Activated T-helper 1 cell treated with anti-CD3 and anti-CD28 coated beads, Interleukin-12 subunit alpha, Interleukin-12 subunit beta, Interleukin-2, Interleukin-4 antibody, amounts not matched to agents 30 ng/mL and 10 ng/mL and 1 ng/mL, durations not matched to agents 14 hours and 24 hours and 36 hours (primary cell): ENCODE measurements at regions of chr15 and their contacts with region 1.

Region 1: DNA sequence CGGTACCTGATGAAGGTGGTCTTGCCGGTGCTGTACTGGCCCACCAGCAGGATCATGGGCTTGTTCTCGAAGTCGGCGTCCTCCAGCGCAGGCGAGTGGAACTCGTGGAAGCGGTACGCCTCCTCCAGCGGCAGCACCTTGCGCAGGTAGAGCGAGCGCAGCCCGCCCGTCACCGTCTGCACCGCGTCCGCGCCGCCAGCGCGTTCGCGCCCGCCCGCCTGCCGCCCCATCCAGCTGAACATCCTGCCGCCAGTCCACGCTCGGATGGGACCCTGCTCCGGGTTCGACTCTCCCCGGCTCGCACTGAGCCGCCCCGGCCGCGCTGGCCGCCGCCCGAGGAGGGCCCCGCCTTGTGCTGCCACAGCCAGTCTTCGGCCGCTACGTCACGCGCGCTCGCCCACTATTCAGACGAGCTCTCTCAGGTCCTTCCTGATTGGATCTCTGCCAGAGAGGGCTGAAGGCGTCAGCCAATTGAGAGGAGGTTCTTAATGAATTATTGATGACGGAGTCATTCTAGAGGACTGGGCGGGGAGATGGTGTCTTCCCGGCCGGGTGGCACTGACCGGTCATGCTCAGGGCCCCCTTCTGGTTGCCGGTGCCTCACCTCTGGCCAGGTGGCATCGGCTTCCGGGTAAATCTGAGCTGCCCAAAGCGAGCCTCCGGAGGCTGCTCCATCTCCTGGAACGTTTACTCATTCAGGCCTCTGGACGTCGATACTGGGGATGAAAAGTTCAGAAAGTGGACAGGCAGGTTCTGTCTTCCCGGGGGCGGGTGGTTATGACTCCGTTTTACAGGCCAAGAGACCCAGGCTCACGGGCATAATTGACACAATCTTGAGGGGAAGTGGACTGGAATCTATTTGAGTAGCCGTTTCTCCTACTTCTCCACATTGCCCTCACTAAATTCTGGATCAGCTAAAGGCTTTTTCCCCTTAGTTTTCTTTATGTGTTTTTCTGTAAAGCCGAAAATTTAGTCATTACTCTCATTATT is at the start of gene EHD4:
- DNase-seq: peak; percentile 95
- H3K4me3 Mint-ChIP-seq: peak within 1 kb of the TSS; percentile 91
- H3K27ac Mint-ChIP-seq: peak within 1 kb of the TSS; percentile 91
- H3K4me1 Mint-ChIP-seq: peaks cover 60% of the 10 kb centered on the region
- H3K27me3 Mint-ChIP-seq: peaks cover 7% of the 10 kb centered on the region
- total RNA-seq, gene EHD4: 29.5 and 30.1 TPM in 2 replicates

Region 2: GRCh38 chr15:41660235-41661077 is 312.1 kb before region 1 on chr15 and contains the start of gene MGA:
- intact Hi-C with region 1: loop called (anchors 2 kb)
- DNase-seq: peak; percentile 88
- H3K4me3 Mint-ChIP-seq: peak within 1 kb of the TSS; percentile 90
- H3K27ac Mint-ChIP-seq: peak within 1 kb of the TSS; percentile 91
- H3K4me1 Mint-ChIP-seq: peaks cover 37% of the 10 kb centered on the region
- H3K27me3 Mint-ChIP-seq: peaks cover 28% of the 10 kb centered on the region
- total RNA-seq, gene MGA: 37.5 and 38.8 TPM in 2 replicates

Region 3: DNA sequence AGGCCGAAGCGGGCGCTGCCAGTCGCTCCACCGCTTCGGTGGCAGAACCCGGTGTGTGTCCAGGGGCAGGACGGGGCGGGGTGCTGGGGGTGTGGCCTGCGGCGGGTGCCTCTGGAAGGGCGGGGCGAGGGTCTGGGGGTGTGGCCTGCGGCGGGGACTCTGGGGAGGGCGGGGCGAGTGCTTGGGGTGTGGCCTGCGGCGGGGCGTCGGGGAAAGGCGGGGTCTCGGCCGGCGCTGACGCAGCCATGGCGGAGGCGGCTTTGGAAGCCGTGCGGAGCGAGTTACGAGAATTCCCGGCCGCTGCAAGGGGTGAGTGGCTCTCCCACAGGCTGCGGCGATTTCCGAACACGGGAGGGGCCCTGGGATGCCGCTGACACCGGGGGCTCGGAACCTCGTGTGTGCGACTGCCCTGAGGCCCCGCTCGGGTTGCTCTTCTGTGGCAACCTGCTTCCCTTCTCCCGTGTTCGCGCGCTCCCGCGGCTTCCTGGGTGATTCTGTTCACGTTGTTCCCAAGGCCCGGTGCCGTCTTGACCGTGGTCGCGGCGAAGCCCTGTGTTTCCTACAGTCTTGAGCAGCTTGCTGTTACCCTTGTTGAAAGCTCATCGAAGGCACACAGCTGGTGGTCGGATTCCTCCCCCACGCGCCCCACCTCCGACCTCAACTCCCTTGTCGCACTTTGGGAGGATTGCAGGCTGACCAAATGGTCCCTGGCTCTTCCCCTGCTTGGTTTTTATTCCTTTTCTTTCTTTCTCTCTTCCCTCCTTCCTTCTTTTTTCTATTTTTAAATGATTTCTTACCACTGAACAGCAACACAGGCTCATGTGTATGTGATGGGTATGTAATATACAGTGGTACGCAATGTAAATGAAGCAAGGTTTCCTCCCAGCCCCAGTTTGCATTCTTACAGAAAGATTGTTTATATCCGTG is 144.4 kb before region 1 on chr15 and contains the start of gene JMJD7:
- intact Hi-C with region 1: loop called (anchors 2 kb)
- DNase-seq: peak; percentile 88
- H3K4me3 Mint-ChIP-seq: peak within 1 kb of the TSS; percentile 86
- H3K27ac Mint-ChIP-seq: peak within 1 kb of the TSS; percentile 72
- H3K4me1 Mint-ChIP-seq: peaks cover 34% of the 10 kb centered on the region
- H3K27me3 Mint-ChIP-seq: no peaks in the 10 kb centered on the region
- total RNA-seq, gene JMJD7: 14.2 and 17.8 TPM in 2 replicates

Region 4: DNA sequence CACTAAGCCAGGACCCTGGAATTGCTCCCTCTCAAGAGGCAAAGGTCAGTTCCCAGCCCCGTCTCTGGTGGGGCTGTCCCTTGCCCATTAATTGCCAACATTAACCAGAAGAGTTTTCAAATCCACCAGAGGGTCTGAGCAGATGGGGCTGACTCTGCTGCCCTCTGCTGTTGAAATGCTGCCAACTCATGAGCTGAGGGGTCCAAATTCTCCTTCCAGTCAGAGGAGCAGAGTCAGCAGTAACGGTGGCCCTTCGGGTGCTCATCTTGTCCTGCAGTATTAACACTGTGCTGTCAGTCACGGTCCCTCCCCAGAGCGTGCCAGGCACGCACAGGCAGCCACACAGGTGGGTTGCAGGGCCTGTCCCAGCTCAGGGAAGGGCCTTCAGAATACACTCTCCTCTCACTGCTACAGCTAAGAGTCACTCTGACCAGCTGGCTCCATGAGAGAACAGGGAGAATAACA is 68.0 kb before region 1 on chr15:
- intact Hi-C with region 1: loop called (anchors 2 kb)
- DNase-seq: peak; percentile 50
- H3K4me3 Mint-ChIP-seq: no peak overlapping the region
- H3K27ac Mint-ChIP-seq: no peak overlapping the region
- H3K4me1 Mint-ChIP-seq: peaks cover 8% of the 10 kb centered on the region
- H3K27me3 Mint-ChIP-seq: no peaks in the 10 kb centered on the region

Region 5: DNA sequence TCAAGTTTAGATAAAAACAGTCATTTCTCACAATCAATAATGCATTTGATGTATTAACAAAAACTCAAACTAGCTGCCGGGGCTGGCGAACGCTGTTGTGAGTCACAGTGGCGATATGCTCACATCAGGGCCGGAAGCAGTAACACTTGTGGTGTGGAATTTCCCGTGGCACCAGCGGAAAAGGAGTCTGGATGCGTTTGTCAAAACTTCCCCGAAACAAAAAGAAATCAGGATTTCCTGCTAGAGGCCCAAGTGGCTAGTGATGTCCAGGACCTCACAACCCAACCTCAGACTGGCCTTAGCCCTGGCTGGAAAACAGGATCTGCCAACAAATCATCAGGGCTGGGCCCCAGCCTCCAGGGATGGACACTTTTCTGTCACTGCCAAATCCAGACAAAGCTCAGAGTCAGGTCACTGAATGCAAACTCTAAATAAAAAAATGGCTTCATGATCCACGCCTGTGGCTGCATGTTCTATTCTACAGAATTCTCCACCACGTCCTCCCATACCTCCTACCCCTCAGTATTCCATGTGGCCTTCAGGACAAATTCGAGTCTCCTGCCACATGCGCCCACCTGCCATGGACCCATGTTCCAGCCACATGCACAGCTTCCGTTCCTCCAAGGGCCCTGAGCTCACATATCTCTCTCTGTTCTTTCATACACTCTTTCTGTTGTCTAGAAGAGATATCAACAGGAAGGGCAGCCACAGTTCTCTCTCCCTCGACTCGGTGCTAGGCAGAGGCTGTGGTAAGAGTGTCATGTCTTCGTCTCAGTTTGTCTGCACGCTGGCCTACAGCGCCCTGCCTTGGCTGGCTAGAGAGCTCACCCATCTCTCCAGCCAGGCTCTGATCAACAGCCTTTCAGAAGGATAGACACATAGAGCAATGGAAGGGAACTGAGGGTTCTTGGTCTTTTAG is 35.6 kb before region 1 on chr15:
- intact Hi-C with region 1: loop called (anchors 1 kb)
- DNase-seq: peak; percentile 78
- H3K4me3 Mint-ChIP-seq: peak overlapping the region; percentile 73
- H3K27ac Mint-ChIP-seq: peak overlapping the region; percentile 100
- H3K4me1 Mint-ChIP-seq: peaks cover 78% of the 10 kb centered on the region
- H3K27me3 Mint-ChIP-seq: no peaks in the 10 kb centered on the region

Region 6: DNA sequence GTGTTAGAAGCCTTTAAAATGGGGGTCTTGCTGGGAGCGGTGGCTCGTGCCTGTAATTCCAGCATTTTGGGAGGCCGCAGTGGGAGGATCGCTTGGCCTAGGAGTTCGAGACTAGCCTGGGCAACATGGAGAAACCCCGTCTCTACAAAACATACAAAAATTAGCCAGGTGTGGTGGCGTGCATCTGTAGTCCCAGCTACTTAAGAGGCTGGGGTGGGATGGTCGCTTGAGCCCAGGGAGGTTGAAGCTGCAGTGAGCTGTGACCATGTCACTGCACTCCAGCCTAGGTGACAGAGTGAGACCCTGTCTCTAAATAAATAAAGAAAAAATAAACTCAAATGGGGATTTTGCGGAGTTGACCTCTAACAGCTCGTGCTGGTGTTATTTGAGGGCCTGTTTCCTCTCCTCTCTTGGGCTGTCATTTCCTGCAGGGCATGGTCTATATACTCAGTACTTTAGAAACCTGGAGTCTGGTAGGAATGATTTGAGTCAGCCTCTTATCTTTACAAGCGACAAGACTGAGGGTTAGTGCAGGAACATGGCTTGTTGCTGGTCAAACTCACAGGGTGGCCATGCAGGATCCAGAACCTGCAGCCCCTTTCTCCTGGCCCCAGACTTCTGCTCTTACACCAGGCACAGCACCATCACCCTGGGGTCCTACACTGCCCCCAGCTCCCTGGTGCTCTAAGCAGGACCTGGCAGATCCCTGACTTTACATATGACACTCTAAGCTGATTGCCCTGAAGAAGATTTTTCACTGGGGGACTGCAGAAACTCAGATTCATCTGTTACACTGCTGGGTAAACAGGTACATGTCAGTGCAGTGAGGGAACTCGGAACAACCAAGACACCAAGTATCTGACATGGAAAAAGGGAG is 15.3 kb before region 1 on chr15:
- intact Hi-C with region 1: loop called (anchors 1 kb)
- DNase-seq: no peak
- H3K4me3 Mint-ChIP-seq: peak overlapping the region; percentile 26
- H3K27ac Mint-ChIP-seq: peak overlapping the region; percentile 63
- H3K4me1 Mint-ChIP-seq: peaks cover 52% of the 10 kb centered on the region
- H3K27me3 Mint-ChIP-seq: no peaks in the 10 kb centered on the region

Region 7: GRCh38 chr15:42194502-42194901 is 222.0 kb after region 1 on chr15:
- intact Hi-C with region 1: loop called (anchors 5 kb)
- DNase-seq: no peak
- H3K4me3 Mint-ChIP-seq: no peak overlapping the region
- H3K27ac Mint-ChIP-seq: peak overlapping the region; percentile 48
- H3K4me1 Mint-ChIP-seq: peaks cover 32% of the 10 kb centered on the region
- H3K27me3 Mint-ChIP-seq: no peaks in the 10 kb centered on the region

Region 8: DNA sequence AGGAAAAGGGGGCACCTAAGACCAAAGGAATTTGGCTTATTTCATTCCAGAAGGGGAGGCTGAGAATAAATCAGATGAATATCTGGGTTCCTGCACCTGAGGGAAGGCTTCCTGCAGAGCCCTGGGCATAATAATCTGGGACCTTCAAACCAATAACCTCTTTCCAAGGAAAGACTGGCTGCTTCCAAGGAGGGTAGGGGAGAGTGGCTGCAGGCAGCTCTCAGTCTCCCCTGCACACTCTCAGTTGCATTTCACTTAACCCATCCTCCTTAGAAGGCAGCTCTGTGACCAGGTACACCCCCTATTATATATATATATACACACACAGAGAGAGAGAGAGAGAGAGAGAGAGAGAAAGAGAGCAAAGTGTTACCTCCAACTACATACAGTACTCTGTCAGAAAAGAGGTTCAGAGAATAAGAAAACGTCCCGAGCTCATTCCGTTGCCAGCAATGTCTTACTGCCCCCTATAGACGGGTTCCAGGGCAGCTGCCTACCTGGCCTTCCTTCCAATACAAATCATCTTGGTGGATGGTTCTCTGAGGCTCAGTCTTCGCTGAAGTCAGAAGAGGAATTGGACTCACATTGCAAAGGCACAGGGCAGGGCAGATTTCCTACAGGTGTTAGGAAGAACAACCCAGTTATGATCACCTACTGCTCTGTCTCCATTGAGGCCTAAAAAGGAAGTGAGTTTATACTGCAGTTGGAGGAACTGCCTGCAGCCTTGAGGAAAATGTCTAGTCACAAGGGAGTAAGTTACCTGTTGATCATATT is 412.8 kb after region 1 on chr15:
- intact Hi-C with region 1: no loop called
- DNase-seq: no peak
- H3K4me3 Mint-ChIP-seq: no peak overlapping the region
- H3K27ac Mint-ChIP-seq: no peak overlapping the region
- H3K4me1 Mint-ChIP-seq: no peaks in the 10 kb centered on the region
- H3K27me3 Mint-ChIP-seq: no peaks in the 10 kb centered on the region